SK-N-SH (cell line): ENCODE measurements at regions of chr11 and their contacts with region 1.

Region 1: GRCh38 chr11:45982656-45983470 is 60.4 kb downstream of the LARGE2 start:
- DNase-seq: peak; percentile 21
- H3K4me3 ChIP-seq: no peak overlapping the region
- H3K27ac ChIP-seq: peak overlapping the region in 1 of 2 experiments; percentile 53; a peak in 1 of 4 replicates
- H3K4me1 ChIP-seq: peaks cover 4 to 36% of the 10 kb centered on the region in 2 experiments; a peak in 3 of 4 replicates
- H3K27me3 ChIP-seq: no peaks in the 10 kb centered on the region
- CTCF ChIP-seq: no peak
- EP300 ChIP-seq: no peak
- RAD21 ChIP-seq: no peak

Region 2: DNA sequence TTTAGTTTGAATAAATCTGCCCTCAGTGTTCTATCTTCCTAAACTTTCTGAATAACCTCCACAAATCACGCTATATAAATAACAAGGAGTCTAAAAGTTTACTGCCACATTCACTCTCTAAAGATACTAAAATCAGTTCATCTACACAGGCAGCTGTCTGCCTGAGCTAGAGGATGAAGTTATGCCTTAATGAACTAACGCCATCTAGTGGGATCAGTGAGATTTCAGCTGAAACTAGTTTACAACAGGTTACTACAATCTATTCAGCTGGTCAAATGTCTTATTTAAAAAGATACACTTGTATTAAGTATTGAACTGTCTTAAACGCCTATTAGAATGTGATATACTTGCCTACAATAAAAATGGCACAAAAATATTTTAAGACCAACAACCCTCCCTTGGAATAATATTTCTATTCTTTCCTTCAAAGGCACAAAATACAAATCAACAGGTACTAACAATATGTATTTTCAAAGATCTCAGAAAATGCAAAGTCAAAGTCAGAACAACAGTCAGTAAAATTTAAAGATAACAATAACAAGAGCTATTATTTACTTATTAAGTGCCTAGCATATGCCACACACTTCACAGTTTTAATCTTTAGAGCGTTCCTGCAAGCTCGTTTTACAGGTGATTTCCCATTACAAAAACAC is 23.7 kb after region 1 on chr11:
- CTCF ChIA-PET with region 1: interaction called, 10 read pairs
- POLR2A ChIA-PET with region 1: no interaction called
- DNase-seq: peak; percentile 65
- H3K4me3 ChIP-seq: no peak overlapping the region; a peak in 1 of 4 replicates
- H3K27ac ChIP-seq: no peak overlapping the region
- H3K4me1 ChIP-seq: peaks cover 0 to 27% of the 10 kb centered on the region in 2 experiments; a peak in 2 of 4 replicates
- H3K27me3 ChIP-seq: no peaks in the 10 kb centered on the region
- CTCF ChIP-seq: peak; percentile 86
- EP300 ChIP-seq: no peak
- RAD21 ChIP-seq: peak; percentile 94